Panc1 (cell line): ENCODE measurements at regions of chr7 and their contacts with region 1.

Region 1: DNA sequence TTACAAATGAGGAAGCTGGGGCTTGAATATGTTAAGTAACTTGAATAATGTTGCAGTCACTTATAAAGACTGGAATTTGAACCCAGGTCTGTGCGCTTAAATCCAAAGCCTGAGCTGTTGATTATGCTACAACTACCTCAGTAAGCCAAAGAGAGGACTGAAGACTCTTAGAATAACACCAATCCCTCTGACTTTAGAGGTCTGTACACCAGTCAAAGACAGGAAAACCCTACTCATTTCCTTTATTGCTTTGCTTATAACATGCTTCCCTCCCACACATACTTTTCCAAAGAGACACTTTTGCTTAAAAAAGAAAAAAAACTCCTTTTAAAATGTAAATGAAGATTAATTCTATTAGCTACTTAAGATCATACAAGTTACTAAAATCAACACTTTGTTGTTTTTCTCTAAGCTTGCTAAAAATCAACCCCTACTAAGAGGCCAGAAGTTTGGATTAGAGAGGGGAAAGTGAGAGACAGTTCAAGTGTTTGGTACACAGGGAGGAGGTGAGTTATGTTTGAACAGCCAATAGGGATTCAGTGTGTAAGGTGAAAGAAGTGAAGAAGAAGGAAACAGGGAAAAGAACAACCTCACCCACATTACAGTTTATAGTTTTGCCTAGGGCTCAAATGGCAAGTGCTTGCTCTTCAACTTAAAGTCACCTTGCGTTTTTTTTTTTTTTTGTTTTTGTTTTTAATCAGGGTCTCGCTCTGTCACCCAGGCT is 74.8 kb downstream of the MDH2 start:
- DNase-seq: no peak
- ATAC-seq: no peak
- H3K4me3 ChIP-seq: no peak overlapping the region
- H3K27ac ChIP-seq: no peak overlapping the region; the same call in 1 of the 2 replicates
- H3K4me1 ChIP-seq: peaks cover 4% of the 10 kb centered on the region; the same call in 1 of the 2 replicates
- H3K27me3 ChIP-seq: no peaks in the 10 kb centered on the region
- CTCF ChIP-seq: no peak

Region 2: GRCh38 chr7:76020031-76020714 is 102.5 kb before region 1 on chr7:
- CTCF ChIA-PET with region 1: no interaction called
- POLR2A ChIA-PET with region 1: interaction called, 10 read pairs
- in situ Hi-C with region 1: no loop called
- intact Hi-C with region 1: no loop called
- DNase-seq: peak; percentile 48
- ATAC-seq: peak; percentile 90
- H3K4me3 ChIP-seq: no peak overlapping the region
- H3K27ac ChIP-seq: no peak overlapping the region
- H3K4me1 ChIP-seq: no peaks in the 10 kb centered on the region
- H3K27me3 ChIP-seq: no peaks in the 10 kb centered on the region
- CTCF ChIP-seq: peak; percentile 88

Region 3: DNA sequence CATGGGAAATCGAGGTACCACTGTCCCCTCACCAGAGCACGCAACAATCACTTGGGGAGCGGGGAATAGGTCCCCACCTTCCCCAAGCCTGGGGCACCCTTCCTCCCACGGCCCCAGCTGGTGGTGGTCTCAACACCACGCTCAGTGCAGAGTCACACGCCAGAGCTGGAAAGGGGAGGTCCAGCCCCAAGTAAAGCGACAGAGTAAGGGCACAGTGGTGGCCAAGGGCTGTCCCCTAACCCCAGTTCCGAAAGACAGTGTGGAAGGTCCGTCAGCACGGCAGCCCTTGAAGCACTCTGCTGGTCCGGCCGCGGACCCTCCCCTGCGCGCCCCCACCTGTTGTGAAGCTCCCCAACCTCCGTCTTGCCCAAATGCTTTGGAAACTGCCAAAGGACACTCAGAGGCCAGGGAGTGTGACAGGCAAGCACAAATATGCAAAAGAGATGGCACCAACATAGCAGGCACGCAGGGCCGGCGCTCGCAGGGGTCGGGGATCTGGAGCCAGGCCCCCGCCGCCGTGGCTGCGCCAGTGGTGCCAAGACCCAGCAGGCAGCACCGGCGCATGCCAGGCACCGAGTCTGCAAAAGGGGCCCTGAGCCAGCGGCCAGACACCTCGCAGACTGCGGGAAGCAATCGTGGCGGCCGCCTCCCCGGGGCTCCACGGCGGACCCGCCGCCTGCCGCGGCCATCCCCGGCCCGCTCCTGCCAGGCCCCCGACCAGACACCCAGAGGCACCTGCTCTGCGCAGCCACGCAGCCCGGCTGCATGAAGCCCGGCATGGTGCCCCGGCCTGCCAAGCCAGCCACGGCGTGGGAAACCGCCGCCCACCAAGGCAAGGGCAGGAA is 27.4 kb after region 1 on chr7:
- CTCF ChIA-PET with region 1: no interaction called
- POLR2A ChIA-PET with region 1: interaction called, 13 read pairs
- in situ Hi-C with region 1: no loop called
- intact Hi-C with region 1: no loop called
- DNase-seq: no peak
- ATAC-seq: peak; percentile 60
- H3K4me3 ChIP-seq: peak overlapping the region; percentile 8 to 16; a peak in 2 of 4 replicates
- H3K27ac ChIP-seq: no peak overlapping the region
- H3K4me1 ChIP-seq: no peaks in the 10 kb centered on the region
- H3K27me3 ChIP-seq: no peaks in the 10 kb centered on the region
- CTCF ChIP-seq: no peak

Region 4: GRCh38 chr7:76282344-76283253 is 159.9 kb after region 1 on chr7:
- CTCF ChIA-PET with region 1: interaction called, 10 read pairs
- POLR2A ChIA-PET with region 1: no interaction called
- in situ Hi-C with region 1: no loop called
- intact Hi-C with region 1: no loop called
- DNase-seq: no peak
- ATAC-seq: peak; percentile 56
- H3K4me3 ChIP-seq: peak overlapping the region; percentile 59 to 65
- H3K27ac ChIP-seq: 0 out of 2 replicates have a peak overlapping the region, but pooled peaks have one; percentile 23
- H3K4me1 ChIP-seq: peaks cover 23% of the 10 kb centered on the region
- H3K27me3 ChIP-seq: no peaks in the 10 kb centered on the region
- CTCF ChIP-seq: no peak